Caco-2 (cell line): ENCODE measurements at regions of chr19 and their contacts with region 1.

Region 1: DNA sequence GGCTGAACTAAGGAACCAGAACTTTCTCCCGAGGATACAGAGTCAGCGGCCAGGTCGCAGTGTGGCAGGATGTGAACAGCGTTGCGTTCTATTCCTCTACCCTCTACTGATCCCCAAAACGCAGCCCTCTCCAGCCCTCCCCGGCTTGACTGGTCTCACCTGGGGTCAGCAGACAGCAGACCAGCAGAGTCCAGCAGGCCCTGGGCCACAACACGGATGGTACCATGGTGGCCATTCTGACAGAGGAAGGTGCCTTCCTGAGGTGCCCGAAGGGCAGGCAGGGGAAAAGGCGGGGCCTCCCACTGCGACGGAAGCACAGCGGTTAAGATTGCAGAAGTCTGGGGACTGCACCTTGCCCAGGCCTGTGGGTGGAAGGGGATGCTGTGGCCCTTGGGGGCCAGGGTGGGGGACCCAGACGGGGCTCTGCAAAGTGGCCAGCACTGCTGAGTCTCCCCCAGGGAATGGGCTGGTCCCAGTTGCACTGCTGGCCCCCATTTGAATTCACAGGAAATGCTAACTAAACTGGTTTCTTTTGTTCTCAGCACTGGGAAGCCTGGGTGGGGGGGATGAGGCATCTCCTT is at the start of gene ICAM3:
- DNase-seq: no peak
- H3K4me3 ChIP-seq: no peak within 1 kb of the TSS
- H3K4me3 Mint-ChIP-seq: no peak within 1 kb of the TSS
- H3K27ac Mint-ChIP-seq: peak within 1 kb of the TSS; percentile 38
- H3K4me1 ChIP-seq: 0 out of 2 replicates have a peak, but pooled peaks cover 6% of the 10 kb centered on the region
- H3K4me1 Mint-ChIP-seq: no peaks in the 10 kb centered on the region
- H3K27me3 ChIP-seq: no peaks in the 10 kb centered on the region
- H3K27me3 Mint-ChIP-seq: no peaks in the 10 kb centered on the region
- CTCF ChIP-seq: no peak
- total RNA-seq, gene ICAM3: 6.9 and 9.8 TPM in 2 replicates

Region 2: DNA sequence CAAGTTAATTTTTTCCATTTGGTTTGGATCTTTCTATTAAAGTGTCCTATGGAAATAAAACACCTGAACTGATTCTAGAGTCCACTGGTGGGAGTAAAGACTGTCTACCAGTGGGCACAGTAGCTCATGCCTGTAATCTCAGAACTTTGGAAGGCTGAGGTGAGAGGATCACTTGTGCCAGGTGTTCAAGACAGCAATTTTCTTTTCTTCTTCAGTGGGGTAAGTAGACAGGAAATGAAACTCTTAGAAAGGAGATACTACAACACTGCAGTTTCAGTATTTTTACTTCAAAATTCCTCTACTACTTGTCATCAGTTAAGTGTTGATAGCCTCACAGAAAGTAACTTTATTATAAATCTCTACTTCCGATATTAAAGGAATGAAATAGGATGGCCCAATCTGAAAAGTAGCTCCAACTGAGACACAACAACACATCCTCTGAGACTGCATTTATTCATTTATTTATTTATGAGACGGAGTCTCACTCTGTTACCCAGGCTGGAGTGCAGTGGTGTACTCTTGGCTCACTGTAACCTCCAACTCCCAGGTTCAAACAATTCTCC is 171.0 kb before region 1 on chr19:
- CTCF ChIA-PET with region 1: no interaction called
- POLR2A ChIA-PET with region 1: no interaction called
- intact Hi-C with region 1: no loop called
- DNase-seq: no peak
- H3K4me3 ChIP-seq: no peak overlapping the region
- H3K4me3 Mint-ChIP-seq: no peak overlapping the region
- H3K27ac Mint-ChIP-seq: no peak overlapping the region
- H3K4me1 ChIP-seq: no peaks in the 10 kb centered on the region
- H3K4me1 Mint-ChIP-seq: no peaks in the 10 kb centered on the region
- H3K27me3 ChIP-seq: no peaks in the 10 kb centered on the region
- H3K27me3 Mint-ChIP-seq: no peaks in the 10 kb centered on the region
- CTCF ChIP-seq: no peak

Region 3: DNA sequence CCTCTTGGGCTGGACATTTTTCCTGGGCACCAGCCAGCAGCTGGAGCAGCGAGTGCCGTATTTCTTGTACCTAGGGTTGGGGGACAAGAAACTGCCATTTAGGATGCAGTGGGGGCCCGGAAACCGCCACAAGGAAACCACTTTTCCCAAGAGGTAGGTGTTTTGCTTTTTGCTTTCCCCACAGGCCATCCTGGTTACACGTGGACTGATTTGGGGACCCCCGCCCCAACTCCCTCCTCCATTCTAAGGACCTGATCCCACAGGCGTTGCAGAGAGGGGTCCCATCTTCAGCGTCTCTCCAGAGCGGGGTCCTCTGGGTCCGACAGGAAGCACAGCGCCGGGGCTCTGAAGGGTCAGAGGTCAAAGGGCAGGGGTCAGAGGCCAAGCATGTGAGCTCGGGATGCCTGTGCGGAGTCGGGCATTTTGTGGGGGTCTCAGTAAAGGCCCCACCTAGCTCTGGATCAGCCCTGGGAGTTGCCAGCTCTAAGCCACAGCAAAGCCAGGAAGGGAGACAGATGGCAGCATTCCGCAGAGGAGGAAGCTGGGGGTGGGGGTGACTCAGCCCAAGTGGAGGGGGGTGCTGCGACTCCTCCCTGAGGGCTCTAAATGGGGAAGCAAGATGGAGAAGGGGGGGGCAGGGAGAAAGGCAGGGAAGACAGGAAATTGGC is 34.2 kb before region 1 on chr19:
- CTCF ChIA-PET with region 1: no interaction called
- POLR2A ChIA-PET with region 1: interaction called, 12 read pairs
- intact Hi-C with region 1: no loop called
- DNase-seq: no peak
- H3K4me3 ChIP-seq: no peak overlapping the region
- H3K4me3 Mint-ChIP-seq: no peak overlapping the region
- H3K27ac Mint-ChIP-seq: no peak overlapping the region
- H3K4me1 ChIP-seq: no peaks in the 10 kb centered on the region
- H3K4me1 Mint-ChIP-seq: no peaks in the 10 kb centered on the region
- H3K27me3 ChIP-seq: no peaks in the 10 kb centered on the region
- H3K27me3 Mint-ChIP-seq: no peaks in the 10 kb centered on the region
- CTCF ChIP-seq: no peak